ENCODE measurements at regions of chr2 and their contacts with region 1.

Region 1: DNA sequence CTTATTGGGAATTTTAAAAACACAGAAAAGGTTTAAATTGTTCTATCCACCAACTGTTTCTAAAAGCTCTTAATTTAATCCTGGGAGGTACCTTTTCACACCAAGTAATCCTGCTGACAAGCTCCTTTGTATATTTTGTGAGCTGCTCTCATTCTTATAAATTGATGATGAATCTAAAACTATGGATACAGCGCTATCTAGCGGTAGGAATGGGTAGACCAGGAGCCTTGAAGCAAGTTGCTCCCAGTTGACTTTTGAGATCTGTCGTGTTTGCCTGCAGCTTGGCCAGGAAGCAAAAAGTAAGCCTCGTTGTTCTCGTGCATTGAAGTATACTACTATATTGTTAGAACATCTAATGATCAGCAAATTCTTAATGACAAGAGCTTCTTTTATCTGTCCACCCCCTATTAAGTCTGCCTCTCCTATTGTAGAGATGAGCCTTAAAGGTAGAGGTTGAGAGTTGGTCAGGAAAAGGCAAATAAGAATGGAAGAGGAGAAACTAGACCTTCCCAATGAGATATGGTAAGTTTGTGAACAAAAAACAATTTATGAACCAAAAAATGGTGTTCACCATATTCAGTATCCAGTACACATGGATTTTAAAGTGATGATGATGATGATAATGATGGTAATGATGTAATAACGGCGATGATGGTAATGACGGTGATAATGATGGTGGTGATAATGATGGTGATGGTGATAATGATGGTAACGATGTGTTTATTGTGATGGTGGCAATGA is 212.0 kb upstream of the NCKAP5 start:
- DNase-seq: peak; percentile 90
- H3K4me3 ChIP-seq: no peak overlapping the region
- H3K27ac ChIP-seq: no peak overlapping the region
- H3K4me1 ChIP-seq: peaks cover 3% of the 10 kb centered on the region
- H3K27me3 ChIP-seq: no peaks in the 10 kb centered on the region
- CTCF ChIP-seq: peak; percentile 73
- POLR2A ChIP-seq: no peak

Region 2: GRCh38 chr2:132267105-132267497 is 1513.2 kb before region 1 on chr2:
- CTCF ChIA-PET with region 1: no interaction called
- POLR2A ChIA-PET with region 1: no interaction called
- dilution Hi-C with region 1: no loop called
- intact Hi-C with region 1: loop called (anchors 1 kb)
- DNase-seq: no peak
- H3K4me3 ChIP-seq: no peak overlapping the region
- H3K27ac ChIP-seq: no peak overlapping the region
- H3K4me1 ChIP-seq: peaks cover 4% of the 10 kb centered on the region
- H3K27me3 ChIP-seq: no peaks in the 10 kb centered on the region
- CTCF ChIP-seq: no peak
- POLR2A ChIP-seq: no peak

Region 3: DNA sequence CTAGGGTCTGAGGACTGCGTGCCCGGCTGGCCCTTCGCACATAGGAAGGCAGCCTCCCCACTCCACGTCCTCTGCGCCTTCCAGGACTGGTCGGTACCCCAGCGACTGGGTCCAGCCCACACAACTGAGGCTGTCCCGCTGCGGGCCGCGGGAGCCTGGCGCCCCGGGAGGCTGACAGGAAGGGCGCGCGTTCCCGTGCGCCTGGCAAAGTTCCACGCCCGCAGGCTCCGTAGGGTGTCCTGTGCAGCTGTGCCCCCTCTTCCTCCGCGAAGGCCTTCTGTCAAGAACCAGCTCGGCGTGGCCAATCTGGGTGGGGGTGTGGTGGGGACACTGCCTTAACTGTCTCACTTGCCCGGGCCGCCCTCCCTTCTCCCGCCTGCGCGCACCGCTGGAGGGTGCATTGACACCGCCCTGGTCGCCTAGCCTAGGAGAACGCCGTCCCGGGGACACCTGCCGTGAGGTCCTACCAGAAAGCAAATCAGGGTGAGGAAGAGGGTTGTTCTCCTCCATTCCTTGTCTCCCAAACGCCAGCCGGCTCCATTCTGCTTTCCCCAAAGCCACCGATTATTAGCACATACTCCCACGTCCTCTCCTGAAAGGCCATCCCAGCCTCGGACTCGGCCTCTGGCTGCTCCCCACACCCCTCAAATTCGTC is 1109.6 kb before region 1 on chr2:
- CTCF ChIA-PET with region 1: interaction called, 10 read pairs
- POLR2A ChIA-PET with region 1: no interaction called
- dilution Hi-C with region 1: no loop called
- intact Hi-C with region 1: loop called (anchors 5 kb)
- DNase-seq: peak; percentile 44
- H3K4me3 ChIP-seq: peak overlapping the region; percentile 55 to 76 (median 75)
- H3K27ac ChIP-seq: peak overlapping the region; percentile 69
- H3K4me1 ChIP-seq: peaks cover 30% of the 10 kb centered on the region
- H3K27me3 ChIP-seq: no peaks in the 10 kb centered on the region
- CTCF ChIP-seq: no peak
- POLR2A ChIP-seq: peak; percentile 54

Region 4: DNA sequence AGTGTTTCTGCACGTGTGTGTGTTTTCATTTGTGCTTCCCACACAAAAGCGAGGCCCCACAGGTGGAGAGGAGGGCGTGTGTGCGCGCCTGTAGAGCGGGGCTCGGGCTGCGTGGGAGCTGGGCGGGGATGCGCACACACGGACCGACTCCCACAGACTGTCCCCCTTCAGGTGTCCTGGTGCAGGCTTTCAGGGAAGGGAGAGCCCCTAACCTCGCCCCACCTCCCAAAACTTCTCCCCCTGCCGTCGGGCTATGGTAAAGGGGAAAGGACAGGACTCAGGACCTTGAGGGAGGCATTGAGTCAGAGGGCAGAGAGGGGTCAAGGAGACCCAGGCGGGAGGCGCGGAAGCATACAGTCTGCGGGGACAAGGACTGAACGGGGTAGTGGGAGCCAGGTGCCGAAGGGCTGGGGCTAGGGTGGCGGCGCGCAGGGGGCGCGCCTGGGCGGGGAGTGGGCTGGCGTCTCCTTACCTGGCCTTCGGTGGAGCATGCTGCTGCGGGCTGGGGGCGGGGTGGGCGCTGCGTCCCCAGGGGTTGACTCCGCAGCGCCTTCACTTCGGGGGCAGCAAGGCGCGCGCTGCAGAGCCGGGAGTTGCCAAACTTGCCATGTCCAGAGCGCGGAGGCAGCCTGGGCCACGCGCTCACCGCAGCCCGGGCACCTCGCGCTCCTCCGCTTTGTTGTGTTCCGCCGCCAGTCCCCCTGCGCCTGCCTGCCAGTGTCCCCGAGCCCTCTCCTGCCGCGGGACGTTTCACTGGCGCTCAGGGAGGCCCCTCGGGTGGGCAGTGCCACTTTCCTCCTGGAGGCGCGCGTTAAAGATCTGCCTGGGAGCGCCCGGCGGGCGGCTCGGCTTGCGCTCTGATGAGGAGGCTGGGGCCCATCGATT is 514.0 kb before region 1 on chr2:
- CTCF ChIA-PET with region 1: interaction called, 5 read pairs
- POLR2A ChIA-PET with region 1: no interaction called
- dilution Hi-C with region 1: no loop called
- intact Hi-C with region 1: loop called (anchors 10 kb)
- DNase-seq: peak; percentile 13
- H3K4me3 ChIP-seq: peak overlapping the region; percentile 21 to 57 (median 41)
- H3K27ac ChIP-seq: no peak overlapping the region
- H3K4me1 ChIP-seq: peaks cover 4% of the 10 kb centered on the region
- H3K27me3 ChIP-seq: no peaks in the 10 kb centered on the region
- CTCF ChIP-seq: no peak
- POLR2A ChIP-seq: no peak

Region 5: DNA sequence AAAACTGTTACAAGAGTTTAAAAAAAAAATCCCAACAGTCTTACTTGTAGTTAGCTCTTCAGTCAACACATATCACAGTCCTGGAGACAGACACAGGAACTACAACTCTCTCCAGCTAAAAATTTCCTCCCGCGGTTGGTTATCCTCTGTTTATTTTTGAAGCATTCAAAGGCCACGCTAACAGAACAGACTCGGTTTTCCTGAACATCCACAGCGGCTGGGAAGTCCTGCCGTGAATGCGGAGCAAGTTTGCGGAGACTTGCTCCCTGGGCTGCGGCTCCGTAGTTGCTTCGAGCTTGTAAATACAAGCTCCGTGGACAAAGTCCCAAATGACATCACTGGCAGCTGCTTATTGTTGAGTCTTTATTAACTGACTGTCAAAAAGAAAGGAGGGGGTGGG is 212.1 kb before region 1 on chr2 and contains the start of gene NCKAP5:
- CTCF ChIA-PET with region 1: interaction called, 19 read pairs
- POLR2A ChIA-PET with region 1: no interaction called
- dilution Hi-C with region 1: no loop called
- intact Hi-C with region 1: no loop called
- DNase-seq: peak; percentile 61
- H3K4me3 ChIP-seq: peak within 1 kb of the TSS in 2 of 3 experiments; percentile 0 to 36
- H3K27ac ChIP-seq: no peak within 1 kb of the TSS
- H3K4me1 ChIP-seq: peaks cover 5% of the 10 kb centered on the region
- H3K27me3 ChIP-seq: no peaks in the 10 kb centered on the region
- CTCF ChIP-seq: no peak
- POLR2A ChIP-seq: no peak
- total RNA-seq, gene NCKAP5: 3.0 and 3.3 TPM in 2 replicates

Region 6: DNA sequence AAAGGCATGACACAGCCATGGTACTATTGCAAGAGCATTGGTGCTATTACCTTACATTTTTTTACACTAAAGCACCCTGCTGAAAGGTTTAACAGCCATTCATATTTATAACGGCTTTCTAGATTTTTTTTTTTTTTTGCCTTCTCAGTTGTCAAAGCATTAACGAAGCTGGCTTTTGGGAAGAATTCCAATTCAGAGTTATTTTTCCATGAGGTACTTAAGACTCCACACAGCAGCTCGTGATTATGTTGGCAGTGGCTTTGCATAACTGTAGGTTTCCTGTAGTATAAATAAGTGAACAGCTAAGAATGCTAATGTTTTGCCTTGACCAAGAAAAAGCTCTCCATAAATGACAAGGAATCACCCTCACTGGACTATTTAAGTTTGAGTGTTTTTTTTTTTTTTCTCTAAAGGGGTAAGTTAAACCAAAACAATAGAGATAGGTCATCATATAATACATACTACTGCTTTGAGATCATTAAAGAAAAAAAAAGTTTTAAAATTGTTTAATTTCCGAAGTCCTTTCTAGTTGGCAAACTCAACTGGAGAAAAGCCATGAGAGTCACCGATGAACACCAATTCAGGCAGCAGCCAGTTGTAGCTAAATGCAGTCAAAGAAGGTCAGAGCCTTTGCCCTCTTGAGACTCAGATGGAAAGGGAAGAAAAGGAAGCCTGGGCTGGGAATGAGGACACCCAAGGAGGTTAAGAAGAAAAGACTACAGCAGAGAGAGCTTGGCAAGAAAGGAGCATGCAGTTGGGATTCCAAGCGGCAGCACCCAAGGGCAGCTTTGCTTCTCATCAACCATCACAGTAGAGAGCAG is 24.6 kb before region 1 on chr2:
- CTCF ChIA-PET with region 1: interaction called, 10 read pairs
- POLR2A ChIA-PET with region 1: no interaction called
- dilution Hi-C with region 1: no loop called
- intact Hi-C with region 1: no loop called
- DNase-seq: peak; percentile 94
- H3K4me3 ChIP-seq: no peak overlapping the region
- H3K27ac ChIP-seq: no peak overlapping the region
- H3K4me1 ChIP-seq: no peaks in the 10 kb centered on the region
- H3K27me3 ChIP-seq: no peaks in the 10 kb centered on the region
- CTCF ChIP-seq: no peak
- POLR2A ChIP-seq: no peak

Region 7: GRCh38 chr2:133844214-133844892 is 64.1 kb after region 1 on chr2:
- CTCF ChIA-PET with region 1: interaction called, 79 read pairs
- POLR2A ChIA-PET with region 1: no interaction called
- dilution Hi-C with region 1: no loop called
- intact Hi-C with region 1: loop called (anchors 1 kb)
- DNase-seq: peak; percentile 66
- H3K4me3 ChIP-seq: no peak overlapping the region
- H3K27ac ChIP-seq: no peak overlapping the region
- H3K4me1 ChIP-seq: peaks cover 33% of the 10 kb centered on the region
- H3K27me3 ChIP-seq: no peaks in the 10 kb centered on the region
- CTCF ChIP-seq: peak; percentile 77 to 87
- POLR2A ChIP-seq: no peak